ENCODE measurements at regions of chr10 and their contacts with region 1.

Region 1: GRCh38 chr10:30027057-30028005 is 32.1 kb downstream of the JCAD start:
- DNase-seq: peak; percentile 21 to 68
- H3K4me3 ChIP-seq: no peak overlapping the region
- H3K27ac ChIP-seq: no peak overlapping the region
- H3K4me1 ChIP-seq: peaks cover 0 to 5% (median 2%) of the 10 kb centered on the region in 4 experiments; a peak in 3 of 7 replicates
- H3K27me3 ChIP-seq: no peaks in the 10 kb centered on the region; a peak in 2 of 7 replicates
- CTCF ChIP-seq: peak; percentile 55 to 65 (median 65)
- EP300 ChIP-seq: no peak
- POLR2A ChIP-seq: no peak
- RAD21 ChIP-seq: peak; percentile 45 to 59

Region 2: GRCh38 chr10:30041196-30042105 is 14.1 kb after region 1 on chr10:
- CTCF ChIA-PET with region 1: interaction called, 19 read pairs
- POLR2A ChIA-PET with region 1: no interaction called
- DNase-seq: no peak
- H3K4me3 ChIP-seq: no peak overlapping the region
- H3K27ac ChIP-seq: no peak overlapping the region
- H3K4me1 ChIP-seq: peaks cover 0 to 5% (median 4%) of the 10 kb centered on the region in 4 experiments; a peak in 4 of 7 replicates
- H3K27me3 ChIP-seq: no peaks in the 10 kb centered on the region
- CTCF ChIP-seq: no peak
- EP300 ChIP-seq: no peak
- POLR2A ChIP-seq: no peak
- RAD21 ChIP-seq: no peak

Region 3: DNA sequence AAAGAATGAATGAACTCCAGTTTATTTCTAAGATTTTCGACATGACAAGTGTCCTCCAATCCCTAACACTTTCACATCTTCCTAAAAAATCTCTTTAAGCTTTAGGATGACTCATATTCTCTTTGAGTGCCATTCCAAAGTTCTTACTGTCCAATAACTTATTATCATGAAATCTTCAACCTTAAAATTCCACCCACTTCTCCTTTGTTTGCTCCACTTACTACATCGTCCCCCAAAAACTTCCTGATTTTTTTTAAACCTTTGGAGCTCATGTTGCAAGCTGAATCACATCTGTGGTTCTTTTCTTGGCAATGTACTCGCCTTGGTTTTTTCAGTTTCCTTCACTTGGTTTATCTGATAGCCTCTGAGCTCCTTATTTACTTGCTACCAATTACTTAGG is 71.3 kb after region 1 on chr10:
- CTCF ChIA-PET with region 1: no interaction called
- POLR2A ChIA-PET with region 1: no interaction called
- DNase-seq: no peak
- H3K4me3 ChIP-seq: no peak overlapping the region
- H3K27ac ChIP-seq: no peak overlapping the region
- H3K4me1 ChIP-seq: 0 out of 7 replicates have a peak, but pooled peaks cover 0 to 3% (median 0%) of the 10 kb centered on the region in 4 experiments
- H3K27me3 ChIP-seq: no peaks in the 10 kb centered on the region
- CTCF ChIP-seq: no peak
- EP300 ChIP-seq: no peak
- POLR2A ChIP-seq: no peak
- RAD21 ChIP-seq: no peak

Region 4: DNA sequence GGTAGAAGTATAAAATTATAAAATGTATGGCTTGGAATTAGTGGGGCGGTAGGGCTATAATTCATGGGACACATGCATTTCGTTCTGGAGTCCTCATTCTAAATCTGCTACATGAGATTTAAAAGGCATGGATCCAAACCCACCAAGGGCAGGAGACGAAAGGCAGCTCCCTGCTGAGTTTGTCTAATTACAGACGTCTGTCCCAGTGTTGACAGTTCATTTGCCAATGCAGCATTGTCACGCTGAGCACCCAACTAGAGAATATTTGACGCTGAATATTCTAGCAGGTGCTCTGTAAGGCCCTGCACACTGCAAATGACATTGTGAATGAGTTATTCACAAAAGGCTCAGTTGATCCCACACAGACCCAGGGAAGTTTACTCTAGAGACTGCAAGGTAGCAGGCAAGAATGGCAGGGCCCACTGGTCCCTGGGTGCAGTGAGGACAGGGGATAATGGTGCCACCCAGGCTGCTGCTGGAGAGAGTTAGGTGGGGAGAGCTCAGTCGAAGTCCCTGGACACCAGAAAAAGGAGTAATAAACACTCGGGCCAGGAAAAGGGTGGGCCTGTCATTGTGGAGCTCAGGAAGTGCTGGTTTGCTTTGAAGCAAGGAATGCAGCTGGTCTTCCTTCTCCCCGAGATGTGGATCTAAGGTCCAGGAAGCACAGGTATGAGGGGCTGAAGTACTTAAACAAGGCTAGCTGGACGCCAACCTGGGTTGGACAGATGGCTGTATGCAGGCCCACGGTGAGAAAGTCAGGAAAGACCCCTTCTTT is 107.0 kb after region 1 on chr10:
- CTCF ChIA-PET with region 1: no interaction called
- POLR2A ChIA-PET with region 1: no interaction called
- DNase-seq: no peak
- H3K4me3 ChIP-seq: no peak overlapping the region
- H3K27ac ChIP-seq: no peak overlapping the region
- H3K4me1 ChIP-seq: no peaks in the 10 kb centered on the region
- H3K27me3 ChIP-seq: no peaks in the 10 kb centered on the region
- CTCF ChIP-seq: no peak
- EP300 ChIP-seq: no peak
- POLR2A ChIP-seq: no peak
- RAD21 ChIP-seq: no peak

Region 5: DNA sequence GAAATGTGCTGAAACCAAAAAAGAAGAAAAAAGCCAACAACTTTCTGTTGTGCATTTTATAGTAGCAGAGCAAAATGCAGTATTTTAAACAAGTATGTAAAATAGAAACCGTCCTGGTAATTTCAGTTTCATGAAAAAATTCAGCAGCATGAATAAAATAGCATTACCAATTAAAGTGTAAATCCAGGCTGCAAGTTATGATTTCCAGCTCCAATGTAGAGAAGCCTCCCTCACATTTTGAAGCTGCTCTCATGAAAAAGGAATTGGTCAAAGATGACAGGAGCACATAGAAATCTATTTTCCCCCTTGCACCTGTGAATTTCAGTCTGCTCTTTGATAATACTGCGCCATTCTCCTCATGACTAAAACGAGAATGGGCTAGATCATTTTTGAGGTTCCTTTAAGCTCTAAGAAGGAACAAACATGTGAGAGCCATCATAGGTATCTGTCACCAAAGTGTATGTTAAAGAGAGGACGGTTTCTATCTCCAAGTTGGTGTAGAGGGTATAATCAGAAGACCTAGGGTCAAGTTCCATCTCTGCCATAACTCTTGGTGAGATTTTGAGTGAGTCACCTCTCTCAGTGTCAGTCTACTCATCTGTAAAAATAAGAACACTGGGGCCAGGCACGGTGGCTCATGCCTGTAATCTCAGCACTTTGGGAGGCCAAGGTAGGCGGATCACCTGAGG is 214.2 kb after region 1 on chr10:
- CTCF ChIA-PET with region 1: interaction called, 14 read pairs
- POLR2A ChIA-PET with region 1: no interaction called
- DNase-seq: no peak
- H3K4me3 ChIP-seq: no peak overlapping the region
- H3K27ac ChIP-seq: no peak overlapping the region
- H3K4me1 ChIP-seq: no peaks in the 10 kb centered on the region
- H3K27me3 ChIP-seq: no peaks in the 10 kb centered on the region
- CTCF ChIP-seq: no peak
- EP300 ChIP-seq: no peak
- POLR2A ChIP-seq: no peak
- RAD21 ChIP-seq: no peak

Measured in H1 (cell line).